Transverse colon (tissue), 4 donors: ENCODE measurements at regions of chr15 and their contacts with region 1.

Region 1: DNA sequence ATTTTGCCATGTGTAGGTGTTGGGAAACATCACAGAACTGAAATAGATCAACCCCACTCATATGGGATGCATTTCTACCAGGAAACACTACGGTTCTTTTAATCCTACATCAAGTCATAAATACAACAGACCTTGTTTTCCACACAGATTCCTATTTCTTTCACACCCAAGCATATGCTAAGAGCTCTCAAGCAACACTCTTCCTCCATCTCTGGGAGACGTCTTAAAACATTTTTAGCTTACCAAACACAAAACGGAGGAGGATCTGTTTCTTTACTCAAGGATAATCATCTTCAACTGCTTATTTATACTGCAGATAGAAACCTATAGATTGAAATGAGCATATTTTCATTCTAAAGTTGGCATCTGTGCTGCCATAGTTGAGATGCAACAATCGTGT is 5.1 kb downstream of the GJD2 start:
- DNase-seq: no peak
- H3K4me3 ChIP-seq: no peak overlapping the region
- H3K27ac ChIP-seq: no peak overlapping the region
- H3K4me1 ChIP-seq: peaks cover 0 to 2% (median under 1%) of the 10 kb centered on the region in 4 donors
- H3K27me3 ChIP-seq: peaks cover 28% of the 10 kb centered on the region
- CTCF ChIP-seq: no peak
- EP300 ChIP-seq: no peak
- POLR2A ChIP-seq: no peak

Region 2: DNA sequence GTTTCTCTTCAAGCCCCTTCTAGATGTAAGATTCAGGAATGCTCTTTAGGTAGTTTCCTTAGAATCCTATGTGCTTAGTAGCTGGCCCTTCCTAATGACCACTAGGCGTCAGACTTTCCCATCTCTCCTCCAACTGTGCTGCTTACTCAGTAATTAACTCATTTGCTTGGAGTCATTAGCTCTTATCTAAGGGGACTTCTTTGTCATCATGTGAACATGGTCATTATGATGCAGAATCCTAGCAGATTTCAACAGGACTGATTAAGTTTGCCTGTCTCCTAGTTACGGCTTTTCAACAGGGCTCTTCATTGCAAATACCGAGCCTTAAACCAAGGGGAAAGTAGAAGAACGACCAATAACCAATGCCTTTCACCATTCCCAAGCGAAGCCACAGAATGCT is 41.3 kb before region 1 on chr15:
- in situ Hi-C with region 1: no loop called
- intact Hi-C with region 1: loop called (anchors 1 kb)
- DNase-seq: no peak
- H3K4me3 ChIP-seq: no peak overlapping the region
- H3K27ac ChIP-seq: no peak overlapping the region
- H3K4me1 ChIP-seq: no peaks in the 10 kb centered on the region
- H3K27me3 ChIP-seq: no peaks in the 10 kb centered on the region
- CTCF ChIP-seq: peak; percentile 16 to 51 (median 20)
- EP300 ChIP-seq: no peak
- POLR2A ChIP-seq: no peak